Aorta (tissue), 5 donors: ENCODE measurements at regions of chr14 and their contacts with region 1.

Region 1: DNA sequence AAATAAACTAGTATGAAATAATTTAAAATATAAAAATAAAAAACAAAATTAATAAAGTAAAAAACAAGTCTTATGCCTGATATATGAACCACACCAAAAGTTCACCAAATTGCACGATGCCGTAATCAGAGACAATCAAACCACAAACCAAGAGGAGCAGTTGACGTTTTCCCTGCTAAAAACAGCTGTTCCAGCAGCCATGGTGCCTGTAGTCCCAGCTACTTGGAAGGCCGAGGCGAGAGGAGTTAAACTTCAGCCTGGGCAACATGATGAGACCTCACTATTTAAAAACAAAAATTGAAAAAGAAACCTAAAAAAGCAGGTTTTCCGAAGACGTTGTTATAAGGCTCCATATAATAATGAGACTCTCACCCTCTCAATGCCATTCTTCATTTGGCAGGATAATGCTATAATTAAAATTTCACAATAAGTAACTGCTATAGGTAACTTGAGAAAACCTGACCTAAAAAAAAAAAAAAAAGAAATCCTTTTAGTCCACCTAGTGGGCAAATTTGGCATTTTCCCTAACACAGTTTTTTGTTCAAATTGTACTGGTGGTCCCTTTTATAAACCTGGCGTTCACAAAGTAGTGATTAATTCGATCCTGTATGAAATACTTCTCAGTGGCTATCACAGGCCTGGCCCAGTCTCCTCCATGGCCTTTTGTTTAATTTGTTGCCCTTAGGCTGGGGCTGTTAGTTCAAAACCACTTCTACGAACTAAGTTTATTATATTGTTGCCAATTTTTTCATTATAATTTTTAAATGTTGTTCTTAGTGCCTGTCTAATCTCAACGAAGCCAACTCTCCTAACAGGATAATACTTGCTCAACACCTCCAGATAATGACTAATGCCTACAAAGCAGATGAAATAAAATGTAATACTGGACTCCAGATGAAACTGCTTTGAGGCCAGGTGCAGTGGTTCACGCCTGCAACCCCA is 62.1 kb downstream of the TNFAIP2 start:
- DNase-seq: no peak
- ATAC-seq: no peak
- H3K4me3 ChIP-seq: no peak overlapping the region
- H3K27ac ChIP-seq: no peak overlapping the region
- H3K4me1 ChIP-seq: no peaks in the 10 kb centered on the region
- H3K27me3 ChIP-seq: no peaks in the 10 kb centered on the region

Region 2: GRCh38 chr14:103078093-103078749 is 107.1 kb before region 1 on chr14:
- intact Hi-C with region 1: no loop called
- DNase-seq: peak; percentile 85 to 89
- ATAC-seq: peak; percentile 69
- H3K4me3 ChIP-seq: no peak overlapping the region
- H3K27ac ChIP-seq: no peak overlapping the region
- H3K4me1 ChIP-seq: no peaks in the 10 kb centered on the region
- H3K27me3 ChIP-seq: no peaks in the 10 kb centered on the region

Region 3: DNA sequence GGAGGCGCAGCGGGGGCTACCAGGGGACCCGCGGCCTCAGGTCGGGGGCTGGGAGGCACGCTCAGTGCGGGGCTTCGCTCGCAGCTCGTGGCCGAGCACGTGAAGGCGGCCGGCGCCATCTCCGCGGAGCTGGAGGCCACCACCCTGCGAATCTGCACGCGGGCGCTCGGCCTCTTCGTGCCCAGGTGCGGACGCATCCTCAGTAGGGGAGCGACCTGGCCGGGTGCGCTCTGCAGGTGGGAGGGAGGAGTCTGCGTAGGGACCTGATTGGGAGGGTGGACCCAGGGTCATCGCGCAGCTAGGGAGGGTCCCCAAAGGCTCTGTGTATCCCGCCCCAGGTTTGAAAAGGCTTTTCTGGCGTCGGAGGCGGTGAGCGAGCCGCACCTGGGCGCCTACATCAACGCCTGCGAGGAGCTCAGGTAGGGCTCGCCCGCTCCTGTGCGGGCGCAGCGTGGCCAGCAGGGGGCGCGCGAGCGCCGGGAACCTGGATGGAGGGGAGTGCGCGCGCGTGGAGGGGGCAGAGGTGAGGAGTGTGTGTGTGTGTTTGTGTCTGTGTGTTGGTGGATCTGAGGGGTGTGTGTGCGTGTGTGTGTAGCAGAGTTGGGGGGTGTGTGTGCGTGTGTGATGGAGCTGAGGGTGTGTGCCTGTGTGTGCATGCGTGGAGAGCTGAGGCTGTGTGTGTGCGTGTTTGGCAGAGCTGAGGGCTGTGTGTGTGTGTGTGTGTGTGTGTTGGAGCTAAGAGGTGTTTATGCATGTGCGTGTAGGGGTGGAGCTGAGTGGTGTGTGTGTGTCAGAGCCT is 80.5 kb before region 1 on chr14:
- intact Hi-C with region 1: loop called in 1 of 2 experiments (anchors 5 kb)
- DNase-seq: peak; percentile 77 to 90
- ATAC-seq: peak; percentile 86
- H3K4me3 ChIP-seq: no peak overlapping the region
- H3K27ac ChIP-seq: no peak overlapping the region
- H3K4me1 ChIP-seq: no peaks in the 10 kb centered on the region
- H3K27me3 ChIP-seq: no peaks in the 10 kb centered on the region